Posterior cingulate gyrus (tissue), 11 donors: ENCODE measurements at regions of chr2 and their contacts with region 1.

Region 1: GRCh38 chr2:176554101-176555048 is 285.1 kb downstream of the MTX2 start:
- DNase-seq: peak in 7 of 10 donors; percentile 8 to 74 (median 26)

Region 2: DNA sequence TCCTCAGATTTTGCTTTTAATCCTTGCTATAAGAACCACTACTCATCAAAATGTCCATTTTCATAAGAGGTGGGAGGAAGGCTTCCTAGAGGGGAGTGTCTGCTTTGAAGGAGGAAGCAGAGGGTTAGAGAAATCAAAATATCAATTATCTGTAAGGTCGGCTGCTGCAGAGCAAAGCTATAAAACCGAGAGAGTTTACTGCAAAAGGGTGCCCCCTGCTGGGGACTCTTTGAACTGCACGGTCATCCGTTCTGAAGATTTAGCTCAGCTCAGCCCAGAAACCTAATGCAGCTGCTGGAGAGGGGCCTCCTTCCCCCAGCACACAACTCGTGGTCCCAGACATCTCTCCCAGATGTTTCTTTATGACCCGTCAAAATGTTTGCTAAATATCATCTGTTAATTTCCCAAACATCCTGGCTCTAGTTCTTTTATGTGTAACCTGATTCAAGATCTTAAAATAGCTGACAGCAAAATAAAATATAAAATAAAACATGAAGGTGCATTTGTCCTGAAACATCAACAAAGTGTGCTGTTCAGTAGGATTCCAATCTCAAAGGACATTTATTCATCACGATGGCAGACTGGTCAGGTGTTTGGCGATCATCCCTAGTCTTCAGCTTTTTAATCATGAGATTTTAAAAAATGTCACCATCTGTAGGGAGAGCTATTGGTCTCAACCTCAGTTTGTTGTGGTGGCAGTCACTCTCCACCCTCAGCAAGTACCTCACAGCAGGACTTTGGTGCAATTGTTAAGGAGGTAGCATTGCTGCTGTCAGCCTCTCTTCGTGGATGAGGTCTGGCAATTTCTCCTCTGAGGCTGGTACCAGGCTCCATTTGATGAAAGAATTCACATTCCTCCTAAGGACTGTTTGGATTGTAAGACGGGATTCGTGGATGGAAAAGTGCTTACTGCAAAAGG is 99.2 kb before region 1 on chr2:
- intact Hi-C with region 1: loop called (anchors 5 kb)
- DNase-seq: peak; percentile 64 to 97 (median 90)

Region 3: DNA sequence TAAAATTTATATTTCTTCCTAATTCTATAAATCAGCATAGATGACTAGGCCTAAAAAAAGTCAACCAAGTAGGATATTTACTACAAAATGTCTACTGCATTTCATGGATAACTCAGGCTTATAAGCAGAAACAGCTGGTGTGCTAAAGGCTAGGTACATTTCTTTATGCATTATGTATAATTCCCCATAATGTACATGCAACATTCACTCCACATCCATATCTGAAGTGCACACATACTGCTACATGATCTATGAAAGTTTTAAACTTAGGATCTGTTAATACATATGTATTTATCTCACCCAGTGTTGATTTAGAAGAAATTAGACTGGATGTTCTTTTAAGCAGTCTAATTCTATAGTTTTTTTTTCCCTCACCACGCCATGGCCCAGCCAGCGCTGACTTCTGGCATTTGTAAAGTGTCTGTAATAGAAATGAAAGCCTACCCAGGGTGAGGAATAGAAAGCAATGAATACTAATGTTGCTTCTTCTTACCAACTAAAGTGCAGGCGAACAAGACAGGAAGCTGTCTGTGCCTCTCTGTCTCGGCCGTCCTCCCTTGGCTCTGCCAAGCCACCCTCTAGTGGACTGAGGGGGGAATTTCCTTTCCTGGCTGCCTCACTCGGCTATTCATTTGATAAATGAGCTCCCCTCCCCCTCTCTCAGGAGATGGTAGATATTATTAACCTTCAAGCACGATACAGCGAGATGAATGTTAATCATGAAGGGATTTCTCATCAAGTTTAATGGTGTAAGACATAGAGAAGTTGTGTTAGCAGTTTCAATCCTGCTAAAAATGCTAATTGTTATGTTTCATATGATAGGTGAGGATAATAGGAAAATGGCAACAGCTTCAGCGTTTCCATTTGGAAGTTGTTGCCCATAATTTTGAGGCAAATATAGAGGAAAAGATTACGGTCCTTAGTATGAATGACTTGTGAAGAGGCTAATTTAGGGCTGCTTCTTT is 99.4 kb after region 1 on chr2:
- intact Hi-C with region 1: loop called (anchors 5 kb)
- DNase-seq: peak in 8 of 10 donors; percentile 12 to 89 (median 41)